ENCODE measurements at regions of chr6 and their contacts with region 1.

Region 1: GRCh38 chr6:113858480-113859348 is 1.6 kb downstream of the MARCKS start:
- DNase-seq: peak; percentile 77
- ATAC-seq: peak; percentile 83
- H3K4me3 ChIP-seq: peak overlapping the region; percentile 94 to 98
- H3K27ac ChIP-seq: peak overlapping the region; percentile 79
- H3K4me1 ChIP-seq: peaks cover 11 to 28% of the 10 kb centered on the region in 2 experiments; a peak in 3 of 4 replicates
- H3K27me3 ChIP-seq: no peaks in the 10 kb centered on the region
- CTCF ChIP-seq: peak; percentile 40 to 86 (median 79); a peak in 5 of 6 replicates
- POLR2A ChIP-seq: peak; percentile 57
- RAD21 ChIP-seq: peak; percentile 81

Region 2: DNA sequence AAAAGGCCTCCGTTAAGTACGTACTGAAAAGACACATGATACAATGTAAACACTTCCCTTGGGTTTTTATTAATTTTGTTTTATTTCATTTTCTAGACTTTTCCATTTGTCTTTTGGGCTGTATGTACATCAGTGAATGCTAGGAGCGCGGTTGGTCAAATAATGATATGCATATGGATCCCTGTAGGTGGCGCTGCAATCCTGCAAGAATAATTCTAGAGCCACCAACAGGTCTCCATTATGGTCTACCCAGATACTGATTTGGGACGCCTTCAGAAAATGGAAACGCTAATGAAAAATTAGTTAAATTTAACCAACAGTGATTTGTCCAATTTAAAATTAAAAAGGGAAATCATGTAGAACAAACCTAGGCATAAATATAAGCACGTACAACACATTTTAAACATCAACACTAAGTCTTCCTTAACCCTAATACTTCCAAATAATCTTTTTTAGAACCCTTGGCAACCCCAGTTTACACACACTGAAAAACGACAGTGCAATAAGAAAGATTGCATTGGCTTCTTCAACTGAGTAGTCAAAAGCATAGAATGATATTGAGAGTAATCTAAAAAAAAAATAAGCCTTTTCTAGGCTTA is 1078.1 kb before region 1 on chr6:
- CTCF ChIA-PET with region 1: interaction called, 7 read pairs
- POLR2A ChIA-PET with region 1: interaction called, 3 read pairs
- RAD21 ChIA-PET with region 1: no interaction called
- intact Hi-C with region 1: loop called (anchors 1 kb)
- DNase-seq: peak; percentile 75
- ATAC-seq: peak; percentile 99
- H3K4me3 ChIP-seq: no peak overlapping the region
- H3K27ac ChIP-seq: no peak overlapping the region
- H3K4me1 ChIP-seq: no peaks in the 10 kb centered on the region
- H3K27me3 ChIP-seq: no peaks in the 10 kb centered on the region
- CTCF ChIP-seq: peak; percentile 73 to 83 (median 76)
- POLR2A ChIP-seq: no peak
- RAD21 ChIP-seq: peak; percentile 88

Region 3: GRCh38 chr6:113306552-113307145 is 552.1 kb before region 1 on chr6:
- CTCF ChIA-PET with region 1: interaction called, 17 read pairs
- POLR2A ChIA-PET with region 1: no interaction called
- RAD21 ChIA-PET with region 1: interaction called, 3 to 6 read pairs
- intact Hi-C with region 1: loop called (anchors 1 kb)
- DNase-seq: peak; percentile 56
- ATAC-seq: peak; percentile 99
- H3K4me3 ChIP-seq: no peak overlapping the region
- H3K27ac ChIP-seq: no peak overlapping the region
- H3K4me1 ChIP-seq: peaks cover 0 to 9% of the 10 kb centered on the region in 2 experiments; a peak in 2 of 4 replicates
- H3K27me3 ChIP-seq: no peaks in the 10 kb centered on the region
- CTCF ChIP-seq: peak; percentile 55 to 91 (median 84); a peak in 5 of 6 replicates
- POLR2A ChIP-seq: no peak
- RAD21 ChIP-seq: peak; percentile 73

Region 4: DNA sequence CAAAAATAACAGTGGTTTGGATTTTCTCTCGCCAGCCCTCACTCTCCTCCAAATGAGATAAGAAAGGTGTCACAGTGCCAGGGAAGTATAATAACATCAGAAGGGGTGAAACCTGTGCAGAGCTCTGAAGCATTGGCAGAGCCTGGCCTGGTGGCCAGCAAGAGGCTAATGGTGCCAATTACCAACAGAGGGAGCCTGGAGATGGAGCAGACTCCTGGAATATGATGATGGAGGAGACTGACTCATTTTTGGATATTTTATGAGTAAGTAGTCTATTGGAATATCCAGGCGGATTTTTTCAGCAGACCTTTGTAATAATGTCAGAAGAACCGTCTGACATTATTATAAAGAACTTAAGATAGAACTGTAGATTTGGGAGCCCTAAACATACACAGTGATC is 444.2 kb before region 1 on chr6:
- CTCF ChIA-PET with region 1: interaction called, 4 read pairs
- POLR2A ChIA-PET with region 1: no interaction called
- RAD21 ChIA-PET with region 1: no interaction called
- intact Hi-C with region 1: loop called (anchors 1 kb)
- DNase-seq: peak; percentile 57
- ATAC-seq: peak; percentile 100
- H3K4me3 ChIP-seq: no peak overlapping the region
- H3K27ac ChIP-seq: no peak overlapping the region
- H3K4me1 ChIP-seq: peaks cover 6 to 29% of the 10 kb centered on the region in 2 experiments; a peak in 3 of 4 replicates
- H3K27me3 ChIP-seq: no peaks in the 10 kb centered on the region
- CTCF ChIP-seq: peak; percentile 50 to 66 (median 61); a peak in 5 of 6 replicates
- POLR2A ChIP-seq: no peak
- RAD21 ChIP-seq: peak; percentile 74

Region 5: GRCh38 chr6:113632220-113632864 is 226.4 kb before region 1 on chr6:
- CTCF ChIA-PET with region 1: interaction called, 5 read pairs
- POLR2A ChIA-PET with region 1: no interaction called
- RAD21 ChIA-PET with region 1: no interaction called
- intact Hi-C with region 1: loop called (anchors 5 kb)
- DNase-seq: peak; percentile 65
- ATAC-seq: peak; percentile 85
- H3K4me3 ChIP-seq: peak overlapping the region; percentile 24 to 47
- H3K27ac ChIP-seq: peak overlapping the region; percentile 1; the same call in 1 of the 2 replicates
- H3K4me1 ChIP-seq: peaks cover 11 to 27% of the 10 kb centered on the region in 2 experiments
- H3K27me3 ChIP-seq: no peaks in the 10 kb centered on the region
- CTCF ChIP-seq: no peak
- POLR2A ChIP-seq: no peak
- RAD21 ChIP-seq: 0 out of 2 replicates have a peak, but pooled peaks have one; percentile 13

Region 6: GRCh38 chr6:114339706-114340105 is 481.0 kb after region 1 on chr6:
- CTCF ChIA-PET with region 1: no interaction called
- POLR2A ChIA-PET with region 1: no interaction called
- RAD21 ChIA-PET with region 1: no interaction called
- intact Hi-C with region 1: no loop called
- DNase-seq: no peak
- ATAC-seq: no peak
- H3K4me3 ChIP-seq: no peak overlapping the region
- H3K27ac ChIP-seq: no peak overlapping the region
- H3K4me1 ChIP-seq: no peaks in the 10 kb centered on the region
- H3K27me3 ChIP-seq: peaks cover 12% of the 10 kb centered on the region; the same call in 1 of the 2 replicates
- CTCF ChIP-seq: no peak
- POLR2A ChIP-seq: no peak
- RAD21 ChIP-seq: no peak